Vagina (tissue), 2 donors: ENCODE measurements at regions of chr4 and their contacts with region 1.

Region 1: DNA sequence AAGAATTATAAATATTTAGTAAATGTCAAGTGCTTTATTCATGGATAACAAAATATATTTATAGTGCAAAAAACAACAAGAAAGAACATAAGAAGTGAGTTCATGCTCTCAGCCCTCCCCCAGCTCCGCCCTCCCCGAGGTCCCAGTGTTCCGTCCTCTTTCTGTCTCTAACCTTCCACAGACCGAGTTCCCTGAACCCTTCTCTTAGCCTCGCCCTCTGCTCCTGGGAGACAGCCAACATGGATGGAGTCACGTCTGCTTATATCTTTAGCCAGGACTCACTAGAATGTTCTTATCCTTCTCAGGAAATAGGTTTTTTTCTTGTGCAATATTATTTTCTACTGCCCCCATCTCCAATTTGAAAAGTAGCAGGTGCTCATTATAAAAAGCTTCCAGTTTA is 40.1 kb upstream of the HELT start:
- DNase-seq: no peak
- H3K4me3 ChIP-seq: no peak overlapping the region
- H3K27ac ChIP-seq: no peak overlapping the region
- H3K4me1 ChIP-seq: no peaks in the 10 kb centered on the region
- H3K27me3 ChIP-seq: no peaks in the 10 kb centered on the region
- CTCF ChIP-seq: no peak
- POLR2A ChIP-seq: no peak

Region 2: GRCh38 chr4:186088523-186088922 is 1110.3 kb after region 1 on chr4:
- intact Hi-C with region 1: loop called (anchors 5 kb)
- DNase-seq: no peak
- H3K4me3 ChIP-seq: no peak overlapping the region
- H3K27ac ChIP-seq: no peak overlapping the region
- H3K4me1 ChIP-seq: no peaks in the 10 kb centered on the region
- H3K27me3 ChIP-seq: no peaks in the 10 kb centered on the region
- CTCF ChIP-seq: no peak
- POLR2A ChIP-seq: no peak